Left ventricle myocardium superior (tissue), 1 donor: ENCODE measurements at regions of chr11 and their contacts with region 1.

Region 1: DNA sequence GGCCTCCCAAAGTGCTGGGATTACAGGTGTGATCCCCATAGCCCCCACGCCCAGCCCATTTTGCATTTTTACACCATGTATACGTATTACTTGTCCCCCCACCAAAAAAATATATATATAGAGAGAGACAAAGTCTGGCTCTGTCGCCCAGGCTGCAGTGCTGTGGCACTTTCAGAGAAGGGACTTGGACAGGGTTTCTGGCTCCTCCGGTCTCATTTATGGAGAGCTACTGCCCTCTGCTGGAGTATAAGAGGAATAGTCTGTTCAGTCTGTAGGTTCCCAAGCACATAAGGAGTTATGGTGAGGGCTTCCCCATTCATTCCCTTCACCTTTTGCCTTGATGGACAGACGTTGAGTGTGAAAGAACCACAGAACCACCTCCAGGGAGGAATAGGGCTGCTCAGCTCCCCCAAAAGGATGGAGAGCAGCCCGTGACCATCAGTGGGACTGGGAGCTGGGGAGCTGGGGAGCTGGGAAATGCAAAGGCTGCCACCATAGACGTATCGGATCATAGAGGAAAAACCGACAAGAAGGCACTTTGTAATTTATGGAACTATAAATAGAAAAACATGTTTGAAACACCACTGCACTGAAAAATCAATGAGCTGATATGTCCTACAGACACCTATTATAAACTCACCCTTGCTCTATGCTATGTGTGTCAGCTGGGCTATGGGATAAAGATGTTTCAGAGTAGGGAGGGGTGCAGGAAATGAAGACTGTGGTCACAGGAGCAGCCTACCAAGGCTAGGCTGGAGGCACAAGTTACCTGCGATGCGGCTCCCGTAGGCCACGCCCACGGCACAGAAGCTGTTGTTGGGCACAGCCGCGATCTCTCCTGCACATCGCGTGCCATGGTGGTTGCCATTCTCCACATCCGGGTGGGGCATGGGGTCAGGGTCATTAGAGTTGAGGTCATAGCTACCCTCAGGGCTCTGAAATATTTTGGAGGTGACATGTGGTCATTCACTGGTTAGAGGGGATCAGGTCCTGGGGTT is 5.2 kb downstream of the PCSK7 start:
- DNase-seq: peak; percentile 55
- ATAC-seq: peak; percentile 70

Region 2: GRCh38 chr11:117180661-117181585 is 45.8 kb before region 1 on chr11:
- intact Hi-C with region 1: loop called (anchors 5 kb)
- DNase-seq: peak; percentile 74
- ATAC-seq: peak; percentile 13

Region 3: DNA sequence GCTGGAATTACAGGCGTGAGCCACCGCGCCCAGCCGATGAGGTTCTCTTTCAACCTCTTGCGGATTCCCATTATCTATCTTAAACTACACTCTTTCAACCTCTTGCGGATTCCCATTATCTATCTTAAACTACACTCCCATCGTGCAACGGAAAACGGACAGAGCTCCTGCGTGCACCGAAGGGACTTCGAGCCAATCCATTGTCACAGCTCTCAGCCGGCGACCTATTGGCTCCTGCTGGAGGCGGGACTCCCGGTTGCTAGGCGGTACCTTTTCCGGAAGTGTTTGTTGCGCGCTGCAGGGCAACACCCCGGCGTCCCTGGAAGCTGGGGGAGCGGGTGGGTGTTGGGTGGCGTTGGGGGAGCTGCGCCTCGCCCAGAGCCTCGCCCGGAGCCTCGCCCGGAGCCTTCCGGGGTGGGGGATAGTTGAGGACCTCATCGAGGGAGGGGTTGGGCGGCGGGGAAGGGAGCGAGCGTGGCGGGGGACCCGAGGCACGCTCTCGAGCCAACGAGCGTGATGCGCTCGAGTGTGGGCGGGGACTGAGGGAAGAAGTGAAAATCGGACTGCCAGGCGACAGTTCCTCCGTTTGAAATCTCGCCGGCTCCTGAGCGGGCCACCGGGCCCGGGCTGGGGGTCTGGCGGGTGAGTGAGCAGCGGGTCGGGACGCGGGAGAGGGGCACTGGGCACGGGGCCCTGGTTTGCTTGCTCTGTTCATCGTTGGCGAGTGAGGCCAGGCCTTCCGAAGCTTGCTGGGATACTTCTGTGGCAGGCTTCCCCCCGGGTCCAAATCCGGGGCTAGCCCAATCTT is 101.1 kb after region 1 on chr11 and contains the start of gene CEP164:
- intact Hi-C with region 1: no loop called
- DNase-seq: peak; percentile 96
- ATAC-seq: peak; percentile 96
- total RNA-seq, gene CEP164: 4.9 TPM